ENCODE measurements at regions of chr11 and their contacts with region 1.

Region 1: DNA sequence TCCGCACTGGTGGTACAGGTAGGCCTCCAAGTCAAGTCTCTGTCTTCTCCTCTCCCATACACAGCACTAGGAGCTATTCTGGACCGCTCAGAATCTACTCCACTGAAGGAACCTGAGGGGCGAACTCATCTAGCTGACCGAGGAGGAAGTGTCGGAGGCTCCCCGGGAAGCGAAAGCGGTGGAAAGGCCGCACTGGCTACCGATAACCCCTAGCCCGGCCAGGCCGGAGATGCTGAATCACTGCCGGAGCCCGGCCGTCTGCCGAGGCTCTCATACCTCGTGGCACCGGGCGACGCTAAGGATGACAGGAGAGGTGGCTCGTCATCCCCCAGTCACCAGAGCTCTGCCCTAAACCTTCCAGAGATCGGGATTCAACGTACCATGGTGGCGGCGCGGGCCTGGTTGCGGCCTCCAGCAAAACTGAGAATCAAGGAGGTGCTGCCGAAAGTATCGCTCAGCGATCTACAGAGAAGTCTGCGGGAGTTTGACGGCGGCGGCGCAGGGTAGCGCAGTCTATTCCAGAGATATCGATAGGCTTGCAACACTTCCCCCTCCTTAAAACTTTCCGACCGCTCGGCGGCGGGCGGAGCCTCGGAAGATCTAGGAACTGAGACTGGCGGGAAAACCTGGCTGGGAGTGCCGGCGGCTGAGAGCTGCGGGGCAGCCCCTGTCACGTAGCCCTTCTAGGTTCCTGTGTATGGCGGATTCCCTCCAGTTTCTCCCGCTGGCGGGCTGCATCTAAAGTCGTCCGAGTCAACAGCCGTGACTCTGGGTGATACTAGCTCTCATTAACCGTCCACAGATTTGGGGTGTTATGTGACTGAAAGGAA is at the start of gene PSMA1:
- DNase-seq: peak; percentile 95
- ATAC-seq: peak; percentile 98 to 99
- total RNA-seq, gene PSMA1: 99.6 to 123 TPM

Region 2: DNA sequence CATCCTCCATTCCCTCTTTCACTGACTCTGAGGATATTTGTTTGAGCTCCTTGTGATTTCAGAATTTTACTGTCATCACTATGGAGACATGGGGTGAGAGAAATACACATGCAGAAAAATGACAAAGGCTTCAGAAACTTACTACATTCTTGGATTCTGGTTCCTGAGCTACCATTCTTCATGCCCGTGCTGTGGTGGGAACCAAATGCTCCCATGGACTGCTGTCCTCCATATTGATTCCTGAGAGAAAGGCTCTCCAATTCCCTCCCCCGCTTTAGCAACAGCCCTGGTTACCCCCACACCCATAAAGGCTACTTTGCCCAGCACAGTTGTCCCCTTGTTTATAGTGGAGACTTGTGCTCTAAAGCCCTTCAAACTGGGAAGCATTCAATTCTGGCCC is 356.6 kb before region 1 on chr11:
- intact Hi-C with region 1: no loop called
- DNase-seq: no peak
- ATAC-seq: no peak

Region 3: GRCh38 chr11:14463623-14464022 is 56.5 kb before region 1 on chr11:
- intact Hi-C with region 1: loop called in 1 of 2 experiments (anchors 10 kb)
- DNase-seq: no peak
- ATAC-seq: no peak

Region 4: GRCh38 chr11:14892036-14892567 is 372.0 kb after region 1 on chr11 and contains the start of gene CYP2R1:
- intact Hi-C with region 1: loop called in 1 of 2 experiments (anchors 5 kb)
- DNase-seq: peak; percentile 96
- ATAC-seq: peak; percentile 98 to 99
- total RNA-seq, gene CYP2R1: 7.8 to 10.1 TPM